Ovary (tissue), 10 donors: ENCODE measurements at regions of chr20 and their contacts with region 1.

Region 1: GRCh38 chr20:62668441-62669027 is 26.2 kb downstream of the SLCO4A1 start:
- DNase-seq: peak; percentile 60 to 83 (median 78)
- H3K4me3 ChIP-seq: no peak overlapping the region
- H3K27ac ChIP-seq: no peak overlapping the region
- H3K4me1 ChIP-seq: no peaks in the 10 kb centered on the region
- H3K27me3 ChIP-seq: no peaks in the 10 kb centered on the region
- CTCF ChIP-seq: peak; percentile 55 to 79 (median 78)
- EP300 ChIP-seq: no peak
- POLR2A ChIP-seq: no peak

Region 2: DNA sequence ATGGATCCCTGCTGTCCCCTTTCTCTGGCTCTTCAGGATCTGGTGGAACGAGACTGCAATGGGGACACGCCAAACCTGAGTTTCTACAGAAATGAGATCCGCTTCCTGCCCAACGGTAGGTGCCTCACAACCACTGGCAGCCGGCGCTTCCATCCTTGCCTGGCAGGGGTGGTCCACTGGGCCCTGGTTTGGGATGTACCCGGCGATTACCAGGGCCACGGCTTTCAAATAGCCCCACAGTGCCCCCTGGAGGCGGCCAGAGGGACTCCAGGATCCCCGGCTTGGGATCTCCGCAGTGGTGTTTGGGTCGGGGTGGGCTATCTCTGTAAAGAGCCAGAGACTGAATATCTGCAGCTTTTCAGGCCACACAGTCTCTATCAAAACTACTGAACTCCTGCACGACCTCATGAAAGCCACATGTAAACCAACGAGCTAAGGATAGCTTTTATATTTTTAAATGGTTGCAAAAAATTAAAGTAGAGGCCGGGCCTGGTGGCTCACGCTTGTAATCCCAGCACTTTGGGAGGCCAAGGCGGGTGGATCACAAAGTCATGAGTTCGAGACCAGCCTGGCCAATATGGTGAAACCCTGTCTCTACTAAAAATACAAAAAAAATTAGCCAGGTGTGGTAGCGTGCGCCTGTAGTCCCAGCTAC is 139.8 kb after region 1 on chr20:
- intact Hi-C with region 1: loop called in 2 of 4 experiments (anchors 5 kb)
- DNase-seq: peak; percentile 63 to 83 (median 77)
- H3K4me3 ChIP-seq: no peak overlapping the region
- H3K27ac ChIP-seq: no peak overlapping the region
- H3K4me1 ChIP-seq: peaks cover 10% of the 10 kb centered on the region
- H3K27me3 ChIP-seq: no peaks in the 10 kb centered on the region
- CTCF ChIP-seq: peak; percentile 75 to 80 (median 78)
- EP300 ChIP-seq: no peak
- POLR2A ChIP-seq: no peak